PC-9 (cell line): ENCODE measurements at regions of chr13 and their contacts with region 1.

Region 1: DNA sequence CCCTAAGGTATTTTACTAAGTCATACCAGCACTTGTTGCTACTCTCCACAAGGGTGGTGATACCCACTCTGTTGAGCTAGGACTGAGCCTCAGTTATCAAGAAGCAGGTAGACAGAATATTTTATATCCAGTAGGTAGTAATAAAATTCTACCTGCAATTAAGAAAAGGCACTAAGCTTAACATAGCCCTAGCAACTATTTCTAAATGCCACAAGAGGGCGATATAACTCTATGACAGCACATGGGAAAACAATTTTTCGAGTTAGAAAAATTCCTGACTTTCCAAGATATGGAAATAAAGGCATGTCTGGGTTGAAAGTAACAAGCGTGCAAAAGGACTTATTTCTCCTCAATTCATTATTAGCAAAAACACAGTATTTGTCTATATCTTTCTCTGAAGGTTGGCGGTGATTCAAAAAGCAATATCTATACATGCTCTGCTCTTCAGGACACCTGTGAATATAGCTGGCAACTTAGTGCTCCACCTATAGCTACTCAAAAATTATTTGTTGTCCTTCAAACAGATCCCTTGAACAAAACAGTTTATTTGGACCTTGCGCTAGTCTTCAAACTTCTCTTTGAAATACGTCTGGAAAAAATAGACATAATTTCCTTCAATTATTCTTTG is 14.7 kb downstream of the CCDC169 start:
- DNase-seq: peak in 1 of 2 experiments; percentile 38
- H3K4me3 ChIP-seq: no peak overlapping the region
- H3K27ac ChIP-seq: no peak overlapping the region
- H3K4me1 ChIP-seq: no peaks in the 10 kb centered on the region
- H3K27me3 ChIP-seq: no peaks in the 10 kb centered on the region
- CTCF ChIP-seq: peak; percentile 93

Region 2: GRCh38 chr13:36420437-36420891 is 137.5 kb after region 1 on chr13:
- CTCF ChIA-PET with region 1: no interaction called
- POLR2A ChIA-PET with region 1: no interaction called
- intact Hi-C with region 1: loop called (anchors 5 kb)
- DNase-seq: peak; percentile 52 to 63
- H3K4me3 ChIP-seq: no peak overlapping the region
- H3K27ac ChIP-seq: no peak overlapping the region
- H3K4me1 ChIP-seq: peaks cover 40% of the 10 kb centered on the region
- H3K27me3 ChIP-seq: no peaks in the 10 kb centered on the region
- CTCF ChIP-seq: peak; percentile 89

Region 3: GRCh38 chr13:36841391-36841790 is 558.5 kb after region 1 on chr13:
- CTCF ChIA-PET with region 1: no interaction called
- POLR2A ChIA-PET with region 1: no interaction called
- intact Hi-C with region 1: loop called (anchors 5 kb)
- DNase-seq: no peak
- H3K4me3 ChIP-seq: no peak overlapping the region
- H3K27ac ChIP-seq: no peak overlapping the region
- H3K4me1 ChIP-seq: no peaks in the 10 kb centered on the region
- H3K27me3 ChIP-seq: no peaks in the 10 kb centered on the region
- CTCF ChIP-seq: 0 out of 2 replicates have a peak, but pooled peaks have one; percentile 21

Region 4: DNA sequence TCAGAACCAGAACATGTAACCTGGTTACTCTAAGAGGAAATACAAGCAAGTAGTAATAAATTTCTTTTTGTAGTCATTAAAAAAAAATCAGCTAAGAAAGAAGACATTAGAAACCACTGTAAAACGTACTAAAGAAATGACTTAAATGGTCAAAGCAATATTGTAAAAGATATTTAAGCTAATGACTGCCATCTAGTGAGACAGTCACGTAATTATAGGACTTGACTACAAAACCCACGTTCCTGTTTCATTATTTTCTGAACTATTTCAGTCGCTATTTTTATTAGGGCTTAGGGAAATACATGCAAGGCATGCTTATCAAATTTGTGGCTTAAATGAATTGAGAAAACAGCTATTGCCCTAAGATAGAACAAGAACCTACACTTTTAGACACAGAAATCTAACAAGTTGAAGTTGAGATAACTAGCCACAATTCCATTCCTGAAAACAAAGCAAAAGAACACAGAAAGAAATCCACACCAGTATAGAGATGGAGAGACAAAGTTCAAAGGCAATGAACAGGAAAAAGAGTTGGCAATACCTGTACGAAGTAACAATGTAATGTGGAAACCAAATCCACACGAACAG is 698.3 kb after region 1 on chr13:
- CTCF ChIA-PET with region 1: no interaction called
- POLR2A ChIA-PET with region 1: no interaction called
- intact Hi-C with region 1: loop called (anchors 5 kb)
- DNase-seq: no peak
- H3K4me3 ChIP-seq: no peak overlapping the region
- H3K27ac ChIP-seq: no peak overlapping the region
- H3K4me1 ChIP-seq: no peaks in the 10 kb centered on the region
- H3K27me3 ChIP-seq: no peaks in the 10 kb centered on the region
- CTCF ChIP-seq: peak; percentile 74

Region 5: GRCh38 chr13:37068962-37069361 is 786.0 kb after region 1 on chr13:
- CTCF ChIA-PET with region 1: no interaction called
- POLR2A ChIA-PET with region 1: no interaction called
- intact Hi-C with region 1: loop called (anchors 2 kb)
- DNase-seq: no peak
- H3K4me3 ChIP-seq: no peak overlapping the region
- H3K27ac ChIP-seq: no peak overlapping the region
- H3K4me1 ChIP-seq: no peaks in the 10 kb centered on the region
- H3K27me3 ChIP-seq: no peaks in the 10 kb centered on the region
- CTCF ChIP-seq: peak; percentile 61